Colonic mucosa (tissue), 4 donors: ENCODE measurements at regions of chr17 and their contacts with region 1.

Region 1: DNA sequence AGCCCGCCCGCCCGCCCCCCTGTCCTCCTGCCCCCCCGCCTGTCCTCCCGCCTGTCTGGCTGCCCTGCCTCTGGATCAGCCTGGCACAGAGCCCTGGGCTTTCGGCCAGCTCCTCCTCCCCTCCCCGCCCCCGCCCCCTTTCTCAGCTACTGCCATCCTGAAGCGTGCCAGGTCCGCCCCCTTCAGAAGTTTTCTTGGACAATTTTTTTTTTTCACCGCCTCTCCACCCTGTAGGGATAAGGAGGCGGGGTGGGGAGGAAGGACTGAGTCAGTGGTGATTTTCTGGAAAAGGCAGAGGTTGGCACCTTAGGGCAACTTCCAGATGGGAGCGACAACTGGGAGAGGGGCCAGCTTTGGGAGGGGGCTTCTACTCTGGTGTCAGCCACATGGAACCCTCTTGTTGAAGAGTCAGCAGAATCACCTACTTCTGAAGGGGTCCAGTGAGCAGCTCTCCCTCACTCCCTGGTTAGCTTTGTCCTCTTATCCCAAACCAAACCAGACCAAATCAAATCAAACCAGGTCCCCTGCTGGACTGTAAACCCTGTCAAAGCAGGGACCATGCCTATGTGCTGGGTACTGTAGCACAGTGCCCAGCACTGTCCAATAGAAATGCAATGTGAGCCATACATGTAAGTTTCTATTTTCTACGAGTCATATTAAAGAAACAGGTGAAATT is 19.7 kb downstream of the IGF2BP1 start:
- DNase-seq: peak; percentile 44
- H3K4me3 ChIP-seq: no peak overlapping the region
- H3K27ac ChIP-seq: no peak overlapping the region
- H3K4me1 ChIP-seq: peaks cover 5% of the 10 kb centered on the region
- H3K27me3 ChIP-seq: peaks cover 37% of the 10 kb centered on the region
- CTCF ChIP-seq: no peak

Region 2: DNA sequence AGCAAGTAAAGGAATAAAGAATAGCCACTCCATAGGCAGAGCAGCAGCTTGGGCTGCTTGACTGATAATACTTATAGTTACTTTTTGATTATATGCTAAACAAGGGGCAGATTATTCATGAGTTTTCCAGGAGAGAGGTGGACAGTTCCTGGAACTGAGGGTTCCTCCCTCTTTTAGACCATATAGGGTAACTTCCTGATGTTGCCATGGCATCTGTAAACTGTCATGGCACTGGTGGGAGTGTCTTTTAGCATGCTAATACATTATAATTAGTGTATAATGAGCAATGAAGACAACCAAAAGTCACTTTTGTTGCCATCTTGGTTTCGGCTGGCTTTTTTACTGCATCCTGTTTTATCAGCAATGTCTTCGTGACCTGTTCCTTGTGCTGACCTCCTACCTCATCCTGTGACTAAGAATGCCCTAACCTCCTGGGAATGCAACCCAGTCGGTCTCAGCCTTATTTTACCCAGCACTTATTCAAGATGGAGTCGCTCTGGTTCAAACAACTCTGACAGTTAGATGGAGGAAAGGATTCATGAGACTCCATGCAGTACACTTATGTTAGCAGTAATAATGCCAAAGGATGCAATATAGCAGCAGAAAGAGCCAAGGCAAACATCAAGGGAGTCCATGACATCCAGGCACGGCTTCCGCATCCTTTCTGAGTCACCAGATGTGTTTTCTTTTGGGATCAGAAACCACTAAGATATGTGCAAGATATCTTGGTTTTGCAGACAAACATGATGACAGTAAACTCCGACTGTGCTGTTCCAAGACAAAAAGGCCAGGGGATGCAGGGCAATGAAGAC is 59.9 kb after region 1 on chr17:
- intact Hi-C with region 1: loop called (anchors 10 kb)
- DNase-seq: no peak
- H3K4me3 ChIP-seq: no peak overlapping the region
- H3K27ac ChIP-seq: no peak overlapping the region
- H3K4me1 ChIP-seq: no peaks in the 10 kb centered on the region
- H3K27me3 ChIP-seq: no peaks in the 10 kb centered on the region
- CTCF ChIP-seq: no peak

Region 3: DNA sequence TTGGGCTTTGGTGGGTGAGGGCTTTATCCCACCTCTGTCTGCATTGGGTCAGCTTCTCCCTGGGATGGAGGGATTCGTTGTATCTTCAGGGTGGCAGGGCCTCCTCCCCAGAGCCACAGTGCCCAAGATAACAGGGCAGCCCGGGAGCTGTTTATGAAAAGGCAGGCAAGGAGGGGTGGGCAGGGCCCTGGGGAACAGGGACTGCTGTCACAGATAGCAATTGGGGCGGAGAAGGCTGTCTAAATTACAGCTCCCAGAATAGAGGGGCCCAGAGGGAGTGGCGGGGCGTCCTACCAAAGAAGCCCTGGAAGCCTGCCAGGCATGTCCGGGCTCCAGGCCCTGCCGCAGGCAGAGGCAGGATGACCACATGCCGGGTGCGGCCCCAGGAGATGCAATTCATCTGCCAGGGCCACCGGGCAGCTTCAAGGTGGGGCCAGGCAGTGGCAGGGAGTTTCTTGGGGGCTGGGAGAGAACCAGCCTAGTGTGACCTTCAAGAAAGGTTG is 232.4 kb after region 1 on chr17:
- intact Hi-C with region 1: no loop called
- DNase-seq: no peak
- H3K4me3 ChIP-seq: no peak overlapping the region
- H3K27ac ChIP-seq: no peak overlapping the region
- H3K4me1 ChIP-seq: no peaks in the 10 kb centered on the region
- H3K27me3 ChIP-seq: no peaks in the 10 kb centered on the region
- CTCF ChIP-seq: no peak

Region 4: GRCh38 chr17:49327835-49328784 is 311.2 kb after region 1 on chr17:
- intact Hi-C with region 1: no loop called
- DNase-seq: no peak
- H3K4me3 ChIP-seq: no peak overlapping the region
- H3K27ac ChIP-seq: no peak overlapping the region
- H3K4me1 ChIP-seq: no peaks in the 10 kb centered on the region
- H3K27me3 ChIP-seq: no peaks in the 10 kb centered on the region
- CTCF ChIP-seq: no peak